ENCODE measurements at regions of chr14 and their contacts with region 1.

Region 1: DNA sequence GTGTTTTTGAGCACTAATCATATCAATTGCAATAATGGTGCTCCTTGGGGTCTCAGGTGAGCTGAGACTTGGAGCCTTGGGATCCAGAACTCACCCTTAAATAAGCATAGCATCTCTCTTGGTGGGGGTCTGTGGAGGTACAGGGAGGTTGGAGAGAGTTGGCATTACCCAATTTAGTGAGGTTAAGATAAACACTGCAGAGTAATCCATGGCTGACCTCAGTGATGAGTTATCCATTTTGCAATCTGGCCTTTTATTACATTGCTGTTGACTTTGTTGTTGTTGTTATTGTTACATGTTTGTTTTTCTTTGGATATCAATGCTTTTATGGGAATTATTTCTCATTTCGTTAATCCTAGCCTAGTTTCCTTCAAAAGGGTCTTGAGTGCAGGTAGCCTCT is 373.3 kb downstream of the NRXN3 start:
- DNase-seq: no peak
- ATAC-seq: no peak
- H3K4me3 ChIP-seq: no peak overlapping the region
- H3K27ac ChIP-seq: no peak overlapping the region
- H3K4me1 ChIP-seq: no peaks in the 10 kb centered on the region
- H3K27me3 ChIP-seq: no peaks in the 10 kb centered on the region
- CTCF ChIP-seq: no peak
- POLR2A ChIP-seq: no peak
- RAD21 ChIP-seq: no peak

Region 2: GRCh38 chr14:78501909-78502308 is 41.5 kb before region 1 on chr14:
- CTCF ChIA-PET with region 1: no interaction called
- POLR2A ChIA-PET with region 1: no interaction called
- RAD21 ChIA-PET with region 1: no interaction called
- intact Hi-C with region 1: loop called (anchors 5 kb)
- DNase-seq: no peak
- ATAC-seq: no peak
- H3K4me3 ChIP-seq: no peak overlapping the region
- H3K27ac ChIP-seq: no peak overlapping the region
- H3K4me1 ChIP-seq: no peaks in the 10 kb centered on the region
- H3K27me3 ChIP-seq: no peaks in the 10 kb centered on the region
- CTCF ChIP-seq: no peak
- POLR2A ChIP-seq: no peak
- RAD21 ChIP-seq: no peak